PC-3 (cell line): ENCODE measurements at regions of chr3 and their contacts with region 1.

Region 1: DNA sequence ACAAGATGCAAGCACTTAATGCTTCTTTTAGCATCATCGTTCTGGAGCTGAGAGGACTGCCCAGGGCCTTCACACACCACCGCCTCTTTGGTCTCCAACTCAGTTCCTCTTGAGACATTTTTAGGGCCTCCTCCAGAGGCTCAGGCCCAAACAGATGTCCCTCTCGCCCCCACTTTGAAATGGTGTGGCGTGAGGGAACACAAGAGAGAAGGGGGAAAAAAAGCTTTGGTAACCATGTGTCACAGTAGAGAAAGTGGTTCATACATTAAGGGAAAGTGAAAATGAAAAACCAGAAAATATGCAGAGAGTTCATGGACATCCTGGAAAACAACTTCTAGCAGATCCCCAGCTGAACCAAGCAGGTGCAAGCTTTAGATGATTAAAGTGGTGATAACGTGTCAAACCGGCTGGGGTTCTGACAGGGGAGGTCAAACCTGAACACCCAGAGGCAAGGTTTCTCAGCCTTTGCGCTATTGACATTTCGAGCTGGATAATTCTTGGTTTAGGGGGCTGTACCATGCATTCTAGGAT is 33.1 kb upstream of the FOXP1 start:
- DNase-seq: no peak
- ATAC-seq: no peak
- H3K4me3 ChIP-seq: no peak overlapping the region
- H3K27ac ChIP-seq: no peak overlapping the region
- H3K4me1 ChIP-seq: no peaks in the 10 kb centered on the region
- H3K27me3 ChIP-seq: no peaks in the 10 kb centered on the region
- CTCF ChIP-seq: no peak

Region 2: GRCh38 chr3:71601811-71602210 is 14.8 kb before region 1 on chr3:
- CTCF ChIA-PET with region 1: no interaction called
- POLR2A ChIA-PET with region 1: interaction called, 10 read pairs
- intact Hi-C with region 1: no loop called
- DNase-seq: peak; percentile 71
- ATAC-seq: peak; percentile 83
- H3K4me3 ChIP-seq: no peak overlapping the region
- H3K27ac ChIP-seq: no peak overlapping the region
- H3K4me1 ChIP-seq: peaks cover 38% of the 10 kb centered on the region
- H3K27me3 ChIP-seq: no peaks in the 10 kb centered on the region
- CTCF ChIP-seq: no peak